Vagina (tissue), 2 donors: ENCODE measurements at regions of chr4 and their contacts with region 1.

Region 1: GRCh38 chr4:105014635-105015034 is 132.0 kb upstream of the TET2 start:
- DNase-seq: no peak
- H3K4me3 ChIP-seq: no peak overlapping the region
- H3K27ac ChIP-seq: no peak overlapping the region
- H3K4me1 ChIP-seq: no peaks in the 10 kb centered on the region
- H3K27me3 ChIP-seq: no peaks in the 10 kb centered on the region
- CTCF ChIP-seq: no peak
- POLR2A ChIP-seq: no peak

Region 2: GRCh38 chr4:105061136-105061696 is 46.6 kb after region 1 on chr4:
- intact Hi-C with region 1: no loop called
- DNase-seq: no peak
- H3K4me3 ChIP-seq: no peak overlapping the region
- H3K27ac ChIP-seq: no peak overlapping the region
- H3K4me1 ChIP-seq: no peaks in the 10 kb centered on the region
- H3K27me3 ChIP-seq: no peaks in the 10 kb centered on the region
- CTCF ChIP-seq: no peak
- POLR2A ChIP-seq: no peak

Region 3: DNA sequence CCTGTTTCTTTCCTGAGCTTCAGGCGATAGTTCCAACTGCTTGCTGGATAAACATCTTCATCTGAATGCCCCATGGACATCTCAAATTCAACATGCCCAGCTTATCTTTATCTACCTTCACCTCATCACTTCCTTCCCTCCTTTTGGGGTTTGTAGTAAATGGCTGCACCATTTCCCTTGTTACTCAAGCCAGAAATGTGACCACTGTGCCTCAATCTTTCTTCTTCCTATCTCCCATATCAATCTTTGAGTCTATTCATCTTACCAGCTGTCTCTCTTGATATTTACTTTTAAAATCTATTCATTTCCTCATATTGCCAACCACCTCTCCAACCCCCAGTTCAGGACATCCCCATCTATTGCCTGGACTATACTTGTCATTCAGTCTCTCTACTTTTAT is 303.9 kb after region 1 on chr4:
- intact Hi-C with region 1: loop called (anchors 10 kb)
- DNase-seq: no peak
- H3K4me3 ChIP-seq: no peak overlapping the region
- H3K27ac ChIP-seq: no peak overlapping the region
- H3K4me1 ChIP-seq: no peaks in the 10 kb centered on the region
- H3K27me3 ChIP-seq: no peaks in the 10 kb centered on the region
- CTCF ChIP-seq: no peak
- POLR2A ChIP-seq: no peak